Activated CD4-positive, alpha-beta T cell treated with anti-CD3 and anti-CD28 coated beads for 36 hours (primary cell): ENCODE measurements at regions of chr1 and their contacts with region 1.

Region 1: GRCh38 chr1:109993885-109994284 is 9.3 kb downstream of the AHCYL1 start:
- DNase-seq: peak; percentile 15
- ATAC-seq: peak; percentile 60
- H3K4me3 Mint-ChIP-seq: no peak overlapping the region
- H3K27ac Mint-ChIP-seq: no peak overlapping the region
- H3K4me1 Mint-ChIP-seq: peaks cover 33% of the 10 kb centered on the region
- H3K27me3 Mint-ChIP-seq: no peaks in the 10 kb centered on the region

Region 2: DNA sequence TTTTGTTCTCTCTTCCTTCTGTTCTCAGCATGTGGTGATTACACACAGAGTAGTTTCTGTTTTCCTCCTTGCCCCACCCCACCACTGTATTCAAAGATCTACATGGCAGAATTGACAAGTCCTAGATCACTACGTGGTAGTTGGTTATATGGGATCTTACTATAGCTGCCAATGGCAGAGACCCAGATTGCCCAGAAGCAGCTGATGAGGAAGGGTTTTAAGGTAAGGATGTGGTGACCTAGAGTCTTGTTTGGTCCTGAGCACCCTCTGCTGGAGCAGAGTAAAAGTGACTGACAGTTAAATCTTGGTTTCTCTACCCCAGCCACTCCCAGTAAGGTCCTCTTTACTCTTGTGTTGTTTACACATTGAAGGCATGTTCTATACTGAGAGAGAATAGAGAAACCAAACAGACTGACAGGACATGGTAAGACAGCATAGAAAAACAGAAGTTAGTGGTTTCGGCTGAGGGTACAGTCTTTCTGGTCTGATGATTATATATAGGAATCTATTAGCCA is 17.7 kb after region 1 on chr1:
- CTCF ChIA-PET with region 1: interaction called, 11 read pairs
- POLR2A ChIA-PET with region 1: no interaction called
- intact Hi-C with region 1: no loop called
- DNase-seq: peak; percentile 41
- ATAC-seq: peak; percentile 95
- H3K4me3 Mint-ChIP-seq: no peak overlapping the region
- H3K27ac Mint-ChIP-seq: no peak overlapping the region
- H3K4me1 Mint-ChIP-seq: no peaks in the 10 kb centered on the region
- H3K27me3 Mint-ChIP-seq: no peaks in the 10 kb centered on the region